WTC11 (cell line): ENCODE measurements at regions of chr13 and their contacts with region 1.

Region 1: GRCh38 chr13:45362939-45363338 is 22.0 kb upstream of the TPT1 start:
- DNase-seq: peak; percentile 68
- ATAC-seq: peak; percentile 91
- H3K4me3 Mint-ChIP-seq: no peak overlapping the region
- H3K27ac Mint-ChIP-seq: no peak overlapping the region
- H3K4me1 Mint-ChIP-seq: peaks cover 25% of the 10 kb centered on the region
- H3K27me3 Mint-ChIP-seq: no peaks in the 10 kb centered on the region; the same call in 1 of the 2 replicates
- CTCF ChIP-seq: peak; percentile 54

Region 2: GRCh38 chr13:45242070-45242469 is 120.9 kb before region 1 on chr13:
- CTCF ChIA-PET with region 1: no interaction called
- POLR2A ChIA-PET with region 1: no interaction called
- DNase-seq: no peak
- ATAC-seq: no peak
- H3K4me3 Mint-ChIP-seq: no peak overlapping the region
- H3K27ac Mint-ChIP-seq: no peak overlapping the region
- H3K4me1 Mint-ChIP-seq: peaks cover 7% of the 10 kb centered on the region
- H3K27me3 Mint-ChIP-seq: no peaks in the 10 kb centered on the region
- CTCF ChIP-seq: no peak

Region 3: GRCh38 chr13:45340926-45341750 is 21.8 kb before region 1 on chr13 and contains the start of gene TPT1:
- CTCF ChIA-PET with region 1: interaction called, 11 read pairs
- POLR2A ChIA-PET with region 1: interaction called, 5 read pairs
- DNase-seq: peak; percentile 98
- ATAC-seq: peak; percentile 96
- H3K4me3 Mint-ChIP-seq: peak within 1 kb of the TSS; percentile 97
- H3K27ac Mint-ChIP-seq: peak within 1 kb of the TSS; percentile 100
- H3K4me1 Mint-ChIP-seq: peaks cover 38% of the 10 kb centered on the region
- H3K27me3 Mint-ChIP-seq: no peaks in the 10 kb centered on the region
- CTCF ChIP-seq: no peak
- total RNA-seq, gene TPT1: 1,861 to 2,091 TPM (median 2,076 TPM) in 3 replicates